ENCODE measurements at regions of chr4 and their contacts with region 1.

Region 1: GRCh38 chr4:99054428-99054994 is 34.1 kb downstream of the ADH5 start:
- DNase-seq: no peak
- ATAC-seq: no peak

Region 2: DNA sequence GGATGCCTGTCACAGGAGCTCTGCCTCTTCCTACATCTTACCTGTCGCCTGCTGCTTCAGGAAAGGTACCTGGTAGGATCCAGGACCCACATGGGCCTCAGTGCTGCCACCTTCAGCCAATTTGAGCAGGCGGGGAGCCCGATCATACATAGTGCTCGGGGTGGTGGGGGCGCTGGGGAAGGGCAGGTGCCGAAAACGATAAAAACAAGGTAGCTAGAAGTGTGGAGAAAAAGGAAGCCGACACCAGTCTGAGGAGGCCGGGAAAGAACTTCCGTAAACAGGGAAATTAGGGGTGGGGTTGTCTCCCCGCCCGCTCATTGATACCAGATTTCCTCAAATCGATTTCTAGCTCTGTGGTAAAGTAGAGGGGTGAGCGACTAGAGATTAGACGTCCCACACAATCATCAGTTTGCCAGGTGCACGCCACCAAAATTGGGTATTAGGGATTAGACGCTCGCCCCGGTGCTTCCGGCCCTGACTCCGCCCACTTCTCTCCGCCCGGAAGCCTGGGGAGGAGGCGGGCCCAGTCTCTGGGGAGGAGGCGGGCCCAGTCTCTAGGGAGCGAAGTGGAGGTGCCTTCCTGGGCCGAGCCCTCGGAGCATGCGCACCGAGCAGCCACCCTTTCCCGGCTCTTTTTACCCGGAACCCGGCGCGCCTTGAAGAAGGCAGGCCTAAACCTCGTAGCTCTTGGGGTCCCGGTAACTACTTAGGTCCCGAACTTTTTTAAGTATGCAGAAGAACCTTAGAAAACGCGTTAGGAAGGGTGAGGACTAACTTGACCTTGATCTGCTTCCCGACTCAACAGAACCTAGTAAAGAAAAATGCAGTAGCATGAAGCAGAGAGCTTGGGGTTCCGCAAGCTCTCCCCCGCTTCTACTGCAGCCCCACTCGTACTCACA is 911.3 kb before region 1 on chr4 and contains the start of gene STPG2:
- intact Hi-C with region 1: loop called in 1 of 2 experiments (anchors 10 kb)
- DNase-seq: peak; percentile 95
- ATAC-seq: peak; percentile 99
- total RNA-seq, gene STPG2: 0.25 TPM in 1 of 2 donors, not detected in the other

Region 3: DNA sequence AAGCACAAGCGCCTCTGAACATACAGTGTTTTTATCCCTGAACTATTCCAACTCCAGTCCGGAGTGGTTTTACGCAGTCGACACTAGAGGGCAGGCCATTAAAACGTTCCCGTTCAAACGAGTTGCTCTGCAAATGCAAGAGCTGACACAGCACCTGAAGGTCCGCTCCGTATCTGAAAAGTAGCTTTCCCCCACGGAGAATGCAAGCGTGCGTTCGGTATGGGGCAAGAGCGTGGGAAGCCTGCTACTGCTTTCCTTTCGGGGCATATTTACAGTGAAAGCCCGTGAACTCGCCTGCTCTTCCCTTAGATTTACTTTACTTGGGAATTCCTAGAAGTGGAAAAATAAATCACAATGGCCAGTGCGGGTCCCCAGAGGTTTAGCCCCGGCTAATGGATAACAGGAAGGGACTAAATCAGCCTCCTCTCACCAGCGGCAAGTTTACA is 586.9 kb before region 1 on chr4:
- intact Hi-C with region 1: loop called in 1 of 2 experiments (anchors 10 kb)
- DNase-seq: peak; percentile 67 to 74
- ATAC-seq: peak; percentile 99

Region 4: GRCh38 chr4:98939892-98940298 is 114.6 kb before region 1 on chr4:
- intact Hi-C with region 1: loop called in 1 of 2 experiments (anchors 10 kb)
- DNase-seq: no peak
- ATAC-seq: peak; percentile 44

Region 5: GRCh38 chr4:99002279-99002678 is 52.2 kb before region 1 on chr4:
- intact Hi-C with region 1: loop called in 1 of 2 experiments (anchors 10 kb)
- DNase-seq: no peak
- ATAC-seq: no peak